ENCODE measurements at regions of chr20 and their contacts with region 1.

Region 1: DNA sequence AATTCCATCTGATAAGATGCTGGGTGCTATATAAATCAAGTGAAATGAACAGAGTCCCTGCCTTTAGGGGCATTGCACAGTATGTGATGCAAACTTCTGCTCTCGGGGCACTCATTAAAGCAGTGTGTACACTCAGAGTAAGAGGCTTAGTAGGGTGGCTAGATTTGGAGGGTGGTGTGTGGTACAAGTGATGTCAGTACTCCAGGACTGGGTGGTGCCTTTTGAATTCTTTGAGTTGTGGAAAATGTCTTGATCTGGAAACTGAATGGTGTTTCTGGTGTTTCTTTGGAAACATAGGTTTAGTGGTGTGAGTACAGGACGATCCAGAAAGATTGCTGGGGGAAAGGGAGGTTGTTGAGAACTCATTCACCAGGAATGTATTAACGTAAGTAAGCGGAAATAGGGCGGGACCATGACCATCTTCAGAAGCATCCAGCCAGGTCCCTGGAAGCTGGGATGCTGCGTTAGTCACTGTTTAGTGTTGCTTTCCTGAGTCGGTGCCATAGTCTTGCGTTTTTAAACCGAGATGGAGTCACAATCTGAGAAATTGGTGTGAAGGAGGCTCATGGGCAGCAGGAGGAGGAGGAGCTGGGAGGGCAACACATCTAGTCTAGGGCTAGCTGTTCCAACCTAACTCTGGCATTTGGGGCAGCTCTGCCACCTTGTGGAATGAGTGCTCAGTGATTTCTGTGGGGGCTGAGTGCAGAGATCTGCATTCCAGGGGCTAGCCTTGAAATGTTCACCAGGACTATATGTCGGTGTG is 70.3 kb downstream of the SCAND1 start:
- DNase-seq: peak; percentile 76

Region 2: DNA sequence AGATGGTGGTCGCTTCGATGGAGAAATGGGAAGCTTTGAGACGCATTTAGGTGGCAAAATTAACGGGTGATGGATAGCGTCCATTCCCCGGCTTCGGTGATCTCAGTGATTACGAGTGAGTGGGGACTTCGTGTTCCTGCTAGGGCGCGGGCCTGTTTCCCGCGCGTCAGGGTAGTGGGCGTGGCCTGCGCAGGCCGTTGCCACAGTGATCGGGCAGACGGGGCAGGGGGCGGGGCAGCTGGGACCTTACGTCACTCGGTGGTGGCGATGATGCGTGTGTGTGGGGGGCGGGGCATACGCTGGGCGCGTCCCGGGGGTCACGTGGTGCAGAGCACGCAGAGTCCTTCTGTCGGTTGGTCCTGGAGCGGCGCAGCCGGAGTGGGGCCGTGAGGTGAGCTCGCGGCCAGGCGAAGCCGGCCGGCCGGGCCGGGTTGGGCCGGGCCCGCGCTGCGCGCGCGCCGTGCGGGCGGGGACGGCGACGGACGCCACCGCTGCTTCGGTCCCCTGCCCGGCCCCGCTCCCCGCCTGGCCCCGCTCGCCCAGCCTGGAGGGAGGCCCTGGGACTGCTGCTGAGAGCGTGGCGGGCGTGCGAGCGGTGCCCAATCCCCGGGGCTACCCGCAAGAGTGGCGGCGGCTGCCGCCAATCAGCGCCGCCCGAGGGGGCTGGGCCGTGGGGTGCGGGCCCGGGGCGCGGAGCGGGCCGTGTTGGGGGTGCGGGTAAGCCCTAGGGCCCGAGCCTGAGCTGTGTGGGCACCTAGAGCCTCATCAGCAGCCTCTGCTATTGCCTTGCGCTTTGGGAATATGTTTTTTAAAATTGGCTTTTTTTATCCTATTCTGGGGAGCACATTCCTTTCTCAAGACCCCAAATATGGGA is 112.0 kb before region 1 on chr20 and contains the start of gene PHF20:
- CTCF ChIA-PET with region 1: no interaction called
- POLR2A ChIA-PET with region 1: interaction called, 11 read pairs
- DNase-seq: peak; percentile 98

Region 3: GRCh38 chr20:35871311-35871771 is 12.6 kb before region 1 on chr20:
- CTCF ChIA-PET with region 1: interaction called, 10 read pairs
- POLR2A ChIA-PET with region 1: no interaction called
- DNase-seq: no peak

Region 4: DNA sequence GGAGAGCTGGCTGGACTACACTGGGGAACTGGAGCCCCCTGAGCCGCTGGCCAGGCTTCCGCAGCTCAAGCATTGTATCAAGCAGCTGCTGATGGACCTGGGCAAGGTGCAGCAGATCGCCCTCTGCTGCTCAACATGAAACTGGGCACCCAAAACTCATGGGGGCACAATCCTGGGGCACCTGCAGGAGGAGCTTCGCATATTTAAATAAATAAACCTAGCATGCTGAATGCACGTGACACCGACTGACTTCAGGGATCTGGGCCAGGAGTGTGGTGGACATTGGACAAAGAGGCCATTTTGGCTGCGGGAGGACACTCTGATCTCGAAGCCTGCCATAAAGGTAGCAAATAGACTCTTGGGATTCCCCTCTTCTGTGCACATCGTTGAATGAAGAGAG is 63.5 kb after region 1 on chr20:
- CTCF ChIA-PET with region 1: no interaction called
- POLR2A ChIA-PET with region 1: no interaction called
- DNase-seq: peak; percentile 45

Region 5: GRCh38 chr20:36004045-36004444 is 120.1 kb after region 1 on chr20:
- CTCF ChIA-PET with region 1: no interaction called
- POLR2A ChIA-PET with region 1: no interaction called
- DNase-seq: no peak

Measured in HEK293T (cell line).